ENCODE measurements at regions of chr10 and their contacts with region 1.

Region 1: DNA sequence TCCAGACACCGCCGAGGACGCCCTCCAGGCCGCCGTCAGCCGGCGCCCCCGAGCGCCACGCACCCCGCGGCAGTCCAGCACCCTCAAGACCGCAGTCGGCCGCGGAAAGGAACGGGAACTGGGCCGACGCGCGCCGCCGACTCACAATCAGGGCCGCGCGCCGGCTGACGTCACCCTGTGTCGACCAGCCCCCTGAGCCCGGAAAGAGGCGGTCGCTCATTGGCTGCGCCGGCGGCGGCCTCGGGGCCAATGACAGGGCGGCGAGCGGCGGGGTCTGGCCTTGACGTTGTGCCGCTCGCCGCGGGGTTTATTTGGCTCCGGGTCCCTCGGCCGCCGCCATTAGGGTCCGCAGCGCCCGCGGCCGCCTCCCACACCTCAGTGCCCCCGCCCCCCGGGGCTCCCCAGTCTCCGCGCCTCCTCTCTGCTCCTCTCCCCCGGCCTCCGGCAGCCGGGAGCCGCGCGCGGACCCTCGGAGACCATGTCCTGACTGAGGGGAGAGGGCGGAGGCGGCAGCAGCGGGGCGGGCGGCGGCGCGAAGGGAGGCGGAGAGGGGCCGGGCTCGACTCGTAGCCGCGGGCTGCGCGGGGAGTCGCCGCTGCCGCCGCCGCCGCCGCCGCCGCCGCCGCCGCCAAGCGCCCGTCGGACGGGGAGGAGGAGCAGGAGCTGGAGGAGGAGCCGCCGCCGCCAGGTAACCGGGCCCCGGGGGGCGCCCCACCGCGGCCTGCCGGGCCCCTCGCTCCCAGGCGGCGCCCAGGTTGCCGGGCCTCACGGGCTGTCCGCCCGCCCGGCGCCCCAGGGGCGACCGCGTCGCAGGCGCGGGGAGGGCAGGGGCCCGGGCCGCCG is 25.1 kb upstream of the ZRANB1 start:
- DNase-seq: peak; percentile 99
- H3K4me3 ChIP-seq: peak overlapping the region; percentile 72 to 94 (median 87)
- H3K27ac ChIP-seq: peak overlapping the region; percentile 93 to 100 (median 96)
- H3K4me1 ChIP-seq: peaks cover 0 to 52% (median 45%) of the 10 kb centered on the region in 4 donors
- H3K27me3 ChIP-seq: no peaks in the 10 kb centered on the region
- CTCF ChIP-seq: no peak
- EP300 ChIP-seq: peak in 1 of 4 donors; percentile 42
- POLR2A ChIP-seq: peak; percentile 69 to 78

Region 2: DNA sequence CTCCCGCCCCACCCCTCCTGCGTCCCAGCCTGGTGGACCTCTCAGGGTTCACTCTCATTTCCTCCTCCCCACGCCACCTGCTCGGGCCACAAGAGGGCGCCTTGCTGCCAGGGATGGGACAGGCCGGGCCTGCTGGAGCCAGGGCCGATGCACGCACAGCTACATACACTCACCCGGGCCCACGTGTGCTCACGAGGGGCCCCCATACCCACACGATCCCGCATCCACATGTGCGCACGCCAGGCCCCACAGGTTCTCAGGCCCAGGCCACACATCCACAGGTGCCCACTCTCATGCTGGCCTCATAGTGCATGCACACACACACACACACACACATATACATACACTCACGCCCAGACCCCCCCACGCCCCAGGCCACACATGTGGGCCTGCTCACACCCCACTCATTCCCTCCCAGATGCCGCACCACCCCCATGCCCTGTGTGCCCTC is 386.6 kb before region 1 on chr10:
- intact Hi-C with region 1: loop called (anchors 5 kb)
- DNase-seq: peak; percentile 93
- H3K4me3 ChIP-seq: no peak overlapping the region
- H3K27ac ChIP-seq: peak overlapping the region in 2 of 4 donors; percentile 54 to 58
- H3K4me1 ChIP-seq: peaks cover 0 to 31% (median 19%) of the 10 kb centered on the region in 4 donors
- H3K27me3 ChIP-seq: no peaks in the 10 kb centered on the region
- CTCF ChIP-seq: peak; percentile 88 to 95 (median 90)
- EP300 ChIP-seq: no peak
- POLR2A ChIP-seq: no peak

Region 3: DNA sequence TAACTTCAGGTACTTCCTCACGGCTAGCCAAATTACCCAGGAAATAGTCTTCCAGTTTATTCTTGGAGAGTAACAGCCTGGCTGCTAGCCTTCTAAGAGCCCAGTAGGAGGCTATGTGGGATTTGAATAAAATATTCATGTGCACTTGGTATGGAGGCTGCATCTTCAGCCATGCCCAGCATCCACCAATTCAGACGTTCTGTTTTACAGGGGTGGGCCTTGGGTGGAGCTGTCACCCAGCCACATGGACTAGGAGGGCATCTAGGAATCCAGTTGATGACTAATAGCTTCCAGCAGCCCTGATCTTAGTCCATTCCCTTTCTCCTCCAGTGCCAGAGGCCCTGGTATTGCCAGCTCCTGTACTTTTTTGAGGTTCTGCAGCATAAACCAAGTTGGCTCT is 41.2 kb before region 1 on chr10:
- intact Hi-C with region 1: no loop called
- DNase-seq: no peak
- H3K4me3 ChIP-seq: no peak overlapping the region
- H3K27ac ChIP-seq: no peak overlapping the region
- H3K4me1 ChIP-seq: no peaks in the 10 kb centered on the region
- H3K27me3 ChIP-seq: no peaks in the 10 kb centered on the region
- CTCF ChIP-seq: no peak
- EP300 ChIP-seq: no peak
- POLR2A ChIP-seq: no peak

Region 4: GRCh38 chr10:124955243-124955642 is 38.4 kb after region 1 on chr10:
- intact Hi-C with region 1: loop called (anchors 5 kb)
- DNase-seq: no peak
- H3K4me3 ChIP-seq: peak overlapping the region in 1 of 4 donors; percentile 16
- H3K27ac ChIP-seq: peak overlapping the region in 3 of 4 donors; percentile 65 to 69 (median 68)
- H3K4me1 ChIP-seq: peaks cover 0 to 52% (median 40%) of the 10 kb centered on the region in 4 donors
- H3K27me3 ChIP-seq: no peaks in the 10 kb centered on the region
- CTCF ChIP-seq: no peak
- EP300 ChIP-seq: peak in 1 of 4 donors; percentile 27
- POLR2A ChIP-seq: no peak

Region 5: DNA sequence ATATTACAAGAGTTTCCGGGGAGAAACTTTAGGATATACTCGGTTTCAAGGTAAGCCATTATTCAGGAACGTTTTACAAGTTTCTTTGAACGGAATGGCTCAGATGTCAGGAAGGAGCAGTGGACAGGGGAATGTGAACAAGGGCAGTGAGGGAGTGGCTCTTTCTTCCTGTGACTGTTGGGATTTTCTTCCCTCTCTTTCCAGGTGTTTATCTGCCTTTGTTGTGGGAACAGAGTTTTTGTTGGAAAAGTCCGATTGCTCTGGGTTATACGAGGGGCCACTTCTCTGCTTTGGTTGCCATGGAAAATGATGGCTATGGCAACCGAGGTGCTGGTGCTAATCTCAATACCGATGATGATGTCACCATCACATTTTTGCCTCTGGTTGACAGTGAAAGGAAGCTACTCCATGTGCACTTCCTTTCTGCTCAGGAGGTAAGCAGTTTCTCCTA is 66.5 kb after region 1 on chr10:
- intact Hi-C with region 1: loop called (anchors 10 kb)
- DNase-seq: no peak
- H3K4me3 ChIP-seq: no peak overlapping the region
- H3K27ac ChIP-seq: no peak overlapping the region
- H3K4me1 ChIP-seq: peaks cover 0 to 10% (median 5%) of the 10 kb centered on the region in 4 donors
- H3K27me3 ChIP-seq: no peaks in the 10 kb centered on the region
- CTCF ChIP-seq: no peak
- EP300 ChIP-seq: no peak
- POLR2A ChIP-seq: no peak

Region 6: DNA sequence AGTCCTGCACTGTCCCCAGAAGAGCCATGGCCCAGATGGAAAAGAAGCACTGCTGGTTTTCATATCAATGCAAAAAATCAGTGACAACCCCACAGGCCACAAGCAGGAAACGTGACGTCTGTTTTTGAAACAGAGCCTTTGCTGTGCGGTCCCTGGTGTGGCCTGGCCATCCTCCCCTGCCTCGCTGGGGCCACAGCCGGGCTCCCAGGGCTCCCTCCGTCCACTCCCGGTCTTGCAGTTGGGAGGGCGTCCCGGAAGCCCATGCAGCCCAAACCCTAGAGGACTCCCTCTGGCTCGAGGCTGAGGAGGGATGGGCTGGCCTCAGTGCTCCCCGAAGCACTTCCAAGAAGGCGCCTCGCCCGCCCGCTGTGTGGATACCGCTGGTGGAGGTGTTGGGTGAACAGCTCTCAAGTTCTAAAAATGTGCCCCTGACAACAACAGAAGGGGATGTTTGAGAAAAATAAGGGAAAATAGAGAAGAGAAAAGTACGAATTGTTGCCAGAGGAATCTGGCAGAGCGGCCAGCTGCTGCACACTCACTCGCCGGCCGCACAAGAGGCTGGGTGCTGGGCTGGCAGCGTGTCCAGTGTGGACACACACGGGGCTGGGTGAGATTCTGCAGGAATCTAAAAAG is 98.6 kb after region 1 on chr10:
- intact Hi-C with region 1: no loop called
- DNase-seq: peak; percentile 72
- H3K4me3 ChIP-seq: no peak overlapping the region
- H3K27ac ChIP-seq: peak overlapping the region; percentile 37 to 69 (median 62)
- H3K4me1 ChIP-seq: peaks cover 0 to 46% (median 38%) of the 10 kb centered on the region in 4 donors
- H3K27me3 ChIP-seq: no peaks in the 10 kb centered on the region
- CTCF ChIP-seq: no peak
- EP300 ChIP-seq: no peak
- POLR2A ChIP-seq: no peak

Measured in sigmoid colon (tissue), 7 donors.